Gastrocnemius medialis (tissue), 4 donors: ENCODE measurements at regions of chr19 and their contacts with region 1.

Region 1: DNA sequence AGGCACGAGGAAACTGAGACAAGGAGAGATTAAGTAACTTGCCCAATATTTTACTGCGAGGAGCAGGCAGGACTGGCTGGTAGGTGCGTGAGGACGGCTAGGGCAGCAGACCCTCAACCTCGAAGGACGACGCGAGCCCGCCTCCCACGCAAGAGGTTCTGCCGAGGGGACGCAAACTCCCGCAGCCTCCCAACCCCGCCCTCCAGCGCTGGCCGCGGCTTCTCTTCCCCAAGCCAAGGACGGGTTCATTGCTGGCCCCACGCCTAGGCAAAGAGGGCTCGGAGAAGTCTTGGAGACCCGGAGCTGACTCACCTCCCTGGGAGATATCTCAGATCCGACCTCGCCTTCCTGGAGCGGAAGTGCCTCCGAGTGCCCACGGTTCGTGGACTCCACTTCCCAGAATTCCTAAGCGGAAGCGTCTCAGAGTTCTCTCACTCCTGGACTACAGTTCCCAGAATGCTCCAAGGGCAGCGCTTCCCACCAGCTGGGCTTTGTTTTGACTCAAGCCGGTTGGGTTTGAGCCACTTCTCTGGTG is at the start of gene ZNF235:
- DNase-seq: peak; percentile 88 to 94
- ATAC-seq: peak; percentile 100
- H3K4me3 ChIP-seq: peak within 1 kb of the TSS; percentile 64 to 86 (median 78)
- H3K27ac ChIP-seq: peak within 1 kb of the TSS; percentile 77 to 87 (median 82)
- H3K4me1 ChIP-seq: peaks cover 3 to 12% of the 10 kb centered on the region in 2 donors
- H3K27me3 ChIP-seq: no peaks in the 10 kb centered on the region
- CTCF ChIP-seq: no peak
- POLR2A ChIP-seq: peak in 1 of 2 donors; percentile 42
- total RNA-seq, gene ZNF235: 1.9 to 3.3 (median 2.1) TPM

Region 2: GRCh38 chr19:44500148-44500956 is 195.6 kb after region 1 on chr19 and contains the start of gene ZNF180:
- in situ Hi-C with region 1: loop called in 1 of 4 experiments (anchors 10 kb)
- intact Hi-C with region 1: no loop called
- DNase-seq: peak; percentile 87 to 89
- ATAC-seq: peak; percentile 99
- H3K4me3 ChIP-seq: peak within 1 kb of the TSS; percentile 77 to 99 (median 88)
- H3K27ac ChIP-seq: peak within 1 kb of the TSS; percentile 75 to 90 (median 82)
- H3K4me1 ChIP-seq: peaks cover 12 to 17% of the 10 kb centered on the region in 2 donors
- H3K27me3 ChIP-seq: no peaks in the 10 kb centered on the region
- CTCF ChIP-seq: peak; percentile 73 to 83 (median 80)
- POLR2A ChIP-seq: peak; percentile 58 to 64
- total RNA-seq, gene ZNF180: 2.1 to 17.4 (median 5.1) TPM